ENCODE measurements at regions of chr19 and their contacts with region 1.

Region 1: GRCh38 chr19:42219812-42220750 is at the start of gene ZNF526:
- DNase-seq: peak; percentile 94 to 98
- H3K4me3 ChIP-seq: peak within 1 kb of the TSS; percentile 61 to 93
- H3K27ac ChIP-seq: peak within 1 kb of the TSS; percentile 84 to 90
- H3K4me1 ChIP-seq: peaks cover 0 to 34% of the 10 kb centered on the region in 2 donors
- H3K27me3 ChIP-seq: no peaks in the 10 kb centered on the region
- CTCF ChIP-seq: no peak
- total RNA-seq, gene ZNF526: 7.0 TPM

Region 2: GRCh38 chr19:42283143-42284065 is 63.3 kb after region 1 on chr19:
- intact Hi-C with region 1: loop called (anchors 2 kb)
- DNase-seq: peak; percentile 87 to 99
- H3K4me3 ChIP-seq: peak overlapping the region; percentile 85 to 86
- H3K27ac ChIP-seq: peak overlapping the region; percentile 93 to 96
- H3K4me1 ChIP-seq: peaks cover 46 to 62% of the 10 kb centered on the region in 2 donors
- H3K27me3 ChIP-seq: no peaks in the 10 kb centered on the region
- CTCF ChIP-seq: no peak

Region 3: DNA sequence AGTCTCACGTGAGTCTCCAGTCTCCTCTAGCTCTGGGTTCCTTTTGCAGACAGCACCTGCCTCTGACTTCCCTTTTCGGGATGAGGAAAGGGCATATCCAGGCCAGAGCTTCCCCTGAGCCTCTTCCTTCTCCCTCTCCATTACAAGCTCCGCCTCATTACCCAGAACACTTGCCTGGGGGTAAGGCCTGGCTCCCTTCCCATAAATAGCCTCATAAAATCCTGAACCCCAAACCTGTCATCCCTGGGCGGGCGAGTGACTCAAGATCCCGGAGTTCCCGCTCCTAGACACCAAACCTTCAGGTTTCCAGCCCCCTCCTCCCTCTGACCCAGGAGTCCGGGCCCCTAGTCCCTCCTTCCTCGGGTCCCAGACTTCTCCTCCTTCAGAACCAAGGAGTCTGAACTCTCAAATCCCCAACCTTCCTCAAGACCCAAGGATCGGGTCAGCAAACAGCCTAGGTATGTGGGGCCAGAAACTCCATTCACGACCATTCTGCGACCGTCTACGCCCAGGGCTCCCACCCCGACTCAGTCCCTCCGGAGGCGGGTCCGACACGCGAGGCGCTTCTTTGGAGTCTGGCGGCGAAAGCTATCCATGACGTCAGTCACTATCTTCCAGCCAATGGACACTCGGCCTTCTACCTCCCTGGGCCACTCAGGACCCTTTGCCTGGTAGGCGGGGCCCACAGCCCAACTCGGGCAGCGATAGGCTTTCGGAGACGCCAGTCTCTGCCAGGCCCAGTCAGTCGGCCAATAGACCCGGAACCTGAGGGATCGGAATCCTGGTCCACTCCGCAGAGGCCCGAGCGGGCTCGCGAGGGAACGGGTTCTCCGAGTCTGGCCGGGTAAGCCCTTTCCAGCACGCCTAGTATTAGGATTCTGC is 176.5 kb after region 1 on chr19:
- intact Hi-C with region 1: loop called (anchors 2 kb)
- DNase-seq: peak; percentile 98 to 99
- H3K4me3 ChIP-seq: peak overlapping the region; percentile 54 to 68
- H3K27ac ChIP-seq: peak overlapping the region; percentile 70 to 76
- H3K4me1 ChIP-seq: peaks cover 7 to 14% of the 10 kb centered on the region in 2 donors
- H3K27me3 ChIP-seq: no peaks in the 10 kb centered on the region
- CTCF ChIP-seq: no peak

Measured in ascending aorta (tissue), 2 donors.